ENCODE measurements at regions of chr22 and their contacts with region 1.

Region 1: DNA sequence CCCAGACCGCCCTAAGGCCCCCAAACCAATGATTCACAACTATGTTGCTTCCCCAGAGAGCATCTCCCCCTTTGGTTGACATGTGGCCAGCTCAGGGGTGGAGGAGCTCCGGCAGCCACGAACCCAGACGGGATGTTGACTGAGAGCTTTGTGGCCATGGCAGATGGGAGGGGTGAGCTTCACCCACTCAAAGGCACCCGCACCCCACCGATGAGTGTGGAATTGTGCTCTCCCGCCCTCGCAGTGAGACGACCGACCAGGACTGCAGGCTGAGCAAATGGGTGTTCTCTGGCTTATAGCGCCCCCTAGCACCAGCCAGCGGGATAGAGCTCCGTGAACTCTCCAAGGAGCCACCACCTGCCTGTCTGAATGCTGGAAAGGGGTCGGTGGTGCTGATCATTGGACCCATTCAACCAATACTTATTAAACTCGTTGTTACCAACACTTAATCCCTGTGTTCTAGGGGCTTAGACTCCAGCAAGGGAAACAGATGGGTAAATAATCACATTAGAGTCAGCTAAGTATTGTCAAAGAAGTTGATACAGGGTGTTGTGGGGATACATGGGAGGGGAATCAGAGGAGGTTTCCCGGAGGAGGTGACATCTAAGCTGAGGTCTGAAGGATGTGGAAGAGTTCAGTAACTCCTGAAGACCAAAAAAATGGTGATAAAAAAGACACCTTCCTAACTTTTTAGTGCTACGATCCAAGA is 4.5 kb upstream of the TIMP3 start:
- DNase-seq: peak; percentile 63
- H3K4me3 ChIP-seq: no peak overlapping the region
- H3K27ac ChIP-seq: no peak overlapping the region
- H3K4me1 ChIP-seq: no peaks in the 10 kb centered on the region
- H3K27me3 ChIP-seq: peaks cover under 1% of the 10 kb centered on the region
- CTCF ChIP-seq: peak; percentile 79 to 89 (median 82)
- POLR2A ChIP-seq: no peak

Region 2: DNA sequence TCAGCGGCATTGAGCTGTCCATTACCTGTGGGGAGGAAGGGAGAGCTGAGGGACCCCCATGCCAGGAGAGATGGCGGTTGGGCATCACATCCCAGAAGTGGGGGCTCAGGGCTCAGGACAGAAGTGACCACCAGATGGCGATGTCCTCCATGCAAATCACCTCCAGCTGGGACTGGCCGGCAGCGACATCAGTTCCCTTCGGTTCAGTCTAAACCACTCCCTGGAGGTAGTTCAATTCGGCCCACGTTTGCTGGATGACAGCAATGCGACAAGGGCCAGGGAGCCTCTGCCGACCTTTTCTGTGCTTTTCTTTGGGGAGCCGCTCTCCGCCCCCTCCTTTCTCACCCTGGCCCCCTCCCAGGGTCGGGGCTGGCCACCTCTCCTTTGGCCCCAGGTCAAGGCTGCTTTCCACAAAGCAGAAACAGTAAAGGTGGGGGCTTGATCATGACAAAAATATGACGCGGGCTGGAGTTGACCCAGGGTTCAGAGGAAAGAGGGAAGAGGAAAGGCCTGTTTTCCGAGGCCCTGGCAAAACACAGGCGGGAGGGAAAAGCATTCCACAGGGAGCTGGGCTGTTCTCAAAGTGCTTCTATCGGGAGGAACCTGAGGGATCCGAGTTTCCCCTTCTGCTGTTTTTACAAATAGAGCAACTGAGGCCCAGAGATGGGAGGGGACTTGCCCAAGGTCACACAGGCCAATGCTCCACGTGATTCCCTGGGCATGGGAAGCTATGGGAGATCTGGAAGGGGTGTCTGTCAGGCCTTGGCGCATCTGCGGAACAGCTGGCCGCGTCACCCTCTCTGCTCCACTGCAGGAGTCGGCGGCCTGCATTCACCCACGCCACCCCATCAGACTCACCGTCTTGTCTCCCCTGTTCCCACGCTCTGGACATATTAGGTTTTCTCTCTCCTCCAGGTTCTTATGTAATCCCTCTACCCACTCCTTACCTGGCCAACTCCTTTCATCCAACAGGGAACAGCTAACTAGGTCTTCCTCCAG is 267.7 kb before region 1 on chr22:
- intact Hi-C with region 1: loop called (anchors 1 kb)
- DNase-seq: peak; percentile 87
- H3K4me3 ChIP-seq: no peak overlapping the region
- H3K27ac ChIP-seq: peak overlapping the region; percentile 41 to 47
- H3K4me1 ChIP-seq: peaks cover 3% of the 10 kb centered on the region
- H3K27me3 ChIP-seq: no peaks in the 10 kb centered on the region
- CTCF ChIP-seq: peak; percentile 78 to 94 (median 89)
- POLR2A ChIP-seq: no peak

Region 3: GRCh38 chr22:32622004-32622743 is 174.8 kb before region 1 on chr22:
- intact Hi-C with region 1: loop called (anchors 5 kb)
- DNase-seq: no peak
- H3K4me3 ChIP-seq: no peak overlapping the region
- H3K27ac ChIP-seq: peak overlapping the region; percentile 73
- H3K4me1 ChIP-seq: no peaks in the 10 kb centered on the region
- H3K27me3 ChIP-seq: no peaks in the 10 kb centered on the region
- CTCF ChIP-seq: no peak
- POLR2A ChIP-seq: no peak

Region 4: GRCh38 chr22:32660292-32660691 is 136.7 kb before region 1 on chr22:
- intact Hi-C with region 1: loop called (anchors 5 kb)
- DNase-seq: peak; percentile 54
- H3K4me3 ChIP-seq: no peak overlapping the region
- H3K27ac ChIP-seq: no peak overlapping the region
- H3K4me1 ChIP-seq: no peaks in the 10 kb centered on the region
- H3K27me3 ChIP-seq: no peaks in the 10 kb centered on the region
- CTCF ChIP-seq: peak; percentile 55 to 81 (median 77)
- POLR2A ChIP-seq: no peak

Region 5: DNA sequence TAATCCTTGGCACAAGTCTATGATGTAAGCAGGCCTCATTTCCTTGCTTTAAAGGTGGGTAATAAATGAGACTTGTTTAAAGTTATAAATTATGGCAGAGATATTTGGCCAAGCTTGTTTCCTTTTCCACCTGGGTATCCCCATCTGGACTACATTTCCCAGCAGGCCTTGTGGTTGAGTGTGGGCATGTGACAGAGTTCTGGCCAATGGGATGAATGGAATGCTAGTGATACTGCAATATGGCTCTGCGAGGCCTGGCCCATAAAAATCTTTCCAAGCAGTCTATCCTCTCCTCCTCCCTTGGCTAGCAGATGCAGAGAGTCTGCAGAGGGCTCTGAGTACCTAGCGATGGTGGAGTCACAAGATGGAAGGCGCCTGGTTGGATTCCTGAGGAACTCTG is 107.0 kb after region 1 on chr22:
- intact Hi-C with region 1: loop called (anchors 10 kb)
- DNase-seq: no peak
- H3K4me3 ChIP-seq: no peak overlapping the region
- H3K27ac ChIP-seq: no peak overlapping the region
- H3K4me1 ChIP-seq: no peaks in the 10 kb centered on the region
- H3K27me3 ChIP-seq: no peaks in the 10 kb centered on the region
- CTCF ChIP-seq: no peak
- POLR2A ChIP-seq: no peak

Region 6: GRCh38 chr22:32985899-32986765 is 189.1 kb after region 1 on chr22:
- intact Hi-C with region 1: loop called (anchors 5 kb)
- DNase-seq: peak; percentile 77
- H3K4me3 ChIP-seq: no peak overlapping the region
- H3K27ac ChIP-seq: peak overlapping the region in 1 of 2 donors; percentile 36
- H3K4me1 ChIP-seq: no peaks in the 10 kb centered on the region
- H3K27me3 ChIP-seq: no peaks in the 10 kb centered on the region
- CTCF ChIP-seq: peak; percentile 75 to 89 (median 82)
- POLR2A ChIP-seq: no peak

Region 7: GRCh38 chr22:33000342-33001280 is 203.6 kb after region 1 on chr22:
- intact Hi-C with region 1: no loop called
- DNase-seq: peak; percentile 39
- H3K4me3 ChIP-seq: no peak overlapping the region
- H3K27ac ChIP-seq: no peak overlapping the region
- H3K4me1 ChIP-seq: no peaks in the 10 kb centered on the region
- H3K27me3 ChIP-seq: no peaks in the 10 kb centered on the region
- CTCF ChIP-seq: peak; percentile 77 to 87 (median 87)
- POLR2A ChIP-seq: no peak

Measured in prostate gland (tissue), 2 donors.